HCT116 (cell line): ENCODE measurements at regions of chr11 and their contacts with region 1.

Region 1: DNA sequence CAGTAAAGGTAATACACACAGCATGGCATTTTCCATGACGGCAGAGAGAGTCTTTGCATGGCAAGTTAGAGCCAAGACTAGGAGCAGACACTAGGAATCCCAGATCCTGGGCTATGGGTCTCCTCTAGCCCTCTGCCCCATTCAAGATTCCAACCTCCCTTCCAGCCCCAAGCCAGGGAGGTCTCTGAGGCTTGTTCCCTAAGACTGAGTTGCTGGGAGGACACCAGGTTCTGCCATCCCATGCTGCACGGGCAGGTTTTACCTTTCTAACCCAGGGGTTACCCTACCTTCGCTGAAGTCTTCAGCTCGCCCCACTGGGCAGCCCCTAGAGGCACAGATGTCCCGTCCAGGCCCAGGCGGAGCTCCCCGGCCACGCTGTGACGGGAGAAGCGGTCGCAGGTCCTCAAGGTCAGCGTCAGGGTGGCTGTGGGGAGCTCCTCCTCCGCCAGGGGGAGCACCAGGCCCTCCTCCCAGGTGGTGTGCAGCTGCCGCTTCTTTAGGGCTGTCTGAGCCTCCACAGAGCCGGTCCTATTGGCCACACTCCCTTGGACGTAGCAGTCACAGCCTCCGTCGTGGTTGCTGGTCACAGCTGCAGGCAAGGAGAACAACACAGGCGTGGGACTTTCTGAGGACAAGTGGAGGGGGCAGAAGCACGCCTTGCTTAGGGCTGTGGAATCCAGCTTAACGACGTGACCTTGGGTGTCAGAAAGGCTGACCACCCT is 33.8 kb downstream of the SYT13 start:
- DNase-seq: peak; percentile 75
- ATAC-seq: peak; percentile 100
- H3K4me3 ChIP-seq: peak overlapping the region; percentile 36 to 48
- H3K27ac ChIP-seq: no peak overlapping the region
- H3K4me1 ChIP-seq: peaks cover 3 to 25% of the 10 kb centered on the region in 2 experiments; a peak in 3 of 4 replicates
- H3K27me3 ChIP-seq: no peaks in the 10 kb centered on the region
- CTCF ChIP-seq: peak; percentile 88 to 97 (median 90)
- POLR2A ChIP-seq: peak; percentile 40
- RAD21 ChIP-seq: peak; percentile 88

Region 2: GRCh38 chr11:45062971-45063611 is 189.2 kb before region 1 on chr11:
- CTCF ChIA-PET with region 1: no interaction called
- POLR2A ChIA-PET with region 1: no interaction called
- RAD21 ChIA-PET with region 1: no interaction called
- intact Hi-C with region 1: no loop called
- DNase-seq: no peak
- ATAC-seq: no peak
- H3K4me3 ChIP-seq: no peak overlapping the region
- H3K27ac ChIP-seq: no peak overlapping the region
- H3K4me1 ChIP-seq: no peaks in the 10 kb centered on the region; a peak in 1 of 4 replicates
- H3K27me3 ChIP-seq: no peaks in the 10 kb centered on the region
- CTCF ChIP-seq: no peak
- POLR2A ChIP-seq: no peak
- RAD21 ChIP-seq: no peak

Region 3: GRCh38 chr11:45110562-45110961 is 141.7 kb before region 1 on chr11:
- CTCF ChIA-PET with region 1: interaction called, 27 read pairs
- POLR2A ChIA-PET with region 1: no interaction called
- RAD21 ChIA-PET with region 1: interaction called, 6 to 9 read pairs
- intact Hi-C with region 1: loop called (anchors 5 kb)
- DNase-seq: peak; percentile 64
- ATAC-seq: peak; percentile 90
- H3K4me3 ChIP-seq: no peak overlapping the region
- H3K27ac ChIP-seq: no peak overlapping the region
- H3K4me1 ChIP-seq: peaks cover 0 to 14% of the 10 kb centered on the region in 2 experiments; a peak in 2 of 4 replicates
- H3K27me3 ChIP-seq: no peaks in the 10 kb centered on the region
- CTCF ChIP-seq: peak; percentile 59 to 91 (median 76); a peak in 5 of 6 replicates
- POLR2A ChIP-seq: no peak
- RAD21 ChIP-seq: peak; percentile 92

Region 4: DNA sequence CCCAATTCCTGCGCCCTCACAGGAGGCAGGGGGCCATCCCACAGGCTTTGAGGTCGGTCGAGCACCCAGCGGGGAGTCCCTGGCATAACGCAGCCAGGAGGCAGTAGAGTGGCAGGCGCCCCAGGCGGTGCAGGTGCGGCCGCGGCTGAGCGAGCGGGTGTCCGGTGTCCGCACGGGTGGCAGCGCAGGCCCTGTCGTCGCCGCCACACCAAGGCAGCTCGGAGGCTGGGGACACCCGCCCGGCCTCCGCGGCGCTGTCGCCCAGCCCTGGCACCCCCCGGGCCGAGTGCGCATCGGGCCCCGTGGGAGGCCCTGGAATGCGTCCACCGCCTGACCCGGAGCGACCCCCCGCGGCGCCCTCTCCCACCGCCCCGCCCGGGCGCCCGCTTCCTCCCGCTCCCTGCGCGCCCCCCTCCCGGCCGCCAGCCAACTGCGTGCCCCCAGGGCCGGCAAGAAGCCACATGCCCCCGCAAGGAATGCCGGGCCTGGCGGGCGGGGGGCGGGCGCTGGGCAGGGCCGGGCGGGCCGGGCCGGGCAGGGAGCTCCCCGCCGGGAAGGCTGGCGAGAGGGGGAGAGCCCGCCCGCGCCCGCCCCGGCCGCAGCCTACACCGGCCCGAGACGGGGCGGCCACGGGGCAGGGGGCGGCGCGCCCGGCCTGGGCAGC is 72.0 kb before region 1 on chr11:
- CTCF ChIA-PET with region 1: interaction called, 3 read pairs
- POLR2A ChIA-PET with region 1: no interaction called
- RAD21 ChIA-PET with region 1: no interaction called
- intact Hi-C with region 1: loop called (anchors 10 kb)
- DNase-seq: peak; percentile 16
- ATAC-seq: peak; percentile 84
- H3K4me3 ChIP-seq: peak overlapping the region; percentile 44 to 56
- H3K27ac ChIP-seq: peak overlapping the region; percentile 82
- H3K4me1 ChIP-seq: peaks cover 27 to 28% of the 10 kb centered on the region in 2 experiments
- H3K27me3 ChIP-seq: no peaks in the 10 kb centered on the region
- CTCF ChIP-seq: peak in 2 of 3 experiments; percentile 54 to 67; a peak in 4 of 6 replicates
- POLR2A ChIP-seq: no peak
- RAD21 ChIP-seq: no peak

Region 5: DNA sequence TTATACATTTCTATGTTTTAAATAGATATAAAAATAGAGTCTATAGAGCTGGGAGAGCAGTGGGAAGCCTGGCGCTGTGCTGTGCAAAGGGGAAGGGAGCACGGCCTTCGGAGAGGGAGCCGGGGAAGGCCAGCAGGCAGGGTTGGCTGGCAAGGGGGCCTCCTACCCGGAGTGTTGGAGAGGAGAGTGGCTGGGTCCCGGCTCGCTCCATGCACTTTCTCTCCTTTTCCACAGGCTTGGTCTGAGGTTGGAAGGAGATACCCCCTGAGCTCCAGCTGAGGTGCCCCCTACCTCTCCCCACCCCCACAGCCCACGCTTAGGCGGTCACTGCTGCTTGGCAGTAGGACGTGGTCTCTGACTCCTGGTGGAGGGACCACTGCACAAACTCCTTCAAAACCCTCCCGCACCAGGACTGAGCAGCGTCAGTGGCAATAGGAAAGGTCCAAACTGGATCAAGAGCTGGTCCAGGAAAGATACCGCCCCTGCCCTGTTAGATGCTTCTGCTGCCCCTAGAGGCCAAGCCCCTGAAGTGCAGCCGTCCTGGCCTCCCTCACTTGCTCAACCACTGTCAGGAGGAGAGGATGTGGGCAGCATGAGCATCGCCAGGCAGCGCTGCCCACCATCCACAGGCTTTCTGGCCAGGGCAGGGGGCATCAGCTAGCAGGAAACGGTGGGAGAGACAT is 19.0 kb before region 1 on chr11:
- CTCF ChIA-PET with region 1: interaction called, 13 read pairs
- POLR2A ChIA-PET with region 1: interaction called, 7 read pairs
- RAD21 ChIA-PET with region 1: no interaction called
- intact Hi-C with region 1: no loop called
- DNase-seq: peak; percentile 28
- ATAC-seq: peak; percentile 97
- H3K4me3 ChIP-seq: no peak overlapping the region
- H3K27ac ChIP-seq: no peak overlapping the region
- H3K4me1 ChIP-seq: no peaks in the 10 kb centered on the region
- H3K27me3 ChIP-seq: peaks cover 8% of the 10 kb centered on the region; the same call in 1 of the 2 replicates
- CTCF ChIP-seq: peak; percentile 17 to 95 (median 82); a peak in 5 of 6 replicates
- POLR2A ChIP-seq: no peak
- RAD21 ChIP-seq: peak; percentile 32; the same call in 1 of the 2 replicates

Region 6: DNA sequence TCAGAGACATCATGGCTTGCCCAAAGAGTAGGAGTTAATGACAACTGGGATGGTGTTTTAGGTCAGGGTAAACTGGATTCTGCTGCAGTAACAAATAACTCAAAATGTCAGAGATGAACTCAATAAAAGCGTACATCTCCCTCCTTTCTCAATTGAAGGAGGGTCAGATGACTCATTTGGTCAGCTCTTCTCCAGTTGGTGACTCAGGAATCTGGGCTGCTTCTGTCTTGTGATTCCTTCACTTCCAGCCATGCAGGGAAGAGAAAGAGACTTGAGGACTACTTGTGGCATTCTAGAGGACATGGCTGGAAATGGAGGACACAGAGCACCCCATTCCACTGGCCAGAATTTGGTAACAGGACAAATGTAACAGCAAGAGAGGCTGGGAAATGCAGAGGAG is 37.1 kb after region 1 on chr11:
- CTCF ChIA-PET with region 1: interaction called, 10 read pairs
- POLR2A ChIA-PET with region 1: interaction called, 4 read pairs
- RAD21 ChIA-PET with region 1: interaction called in 1 of 2 experiments, 4 read pairs
- intact Hi-C with region 1: loop called (anchors 1 kb)
- DNase-seq: no peak
- ATAC-seq: no peak
- H3K4me3 ChIP-seq: no peak overlapping the region
- H3K27ac ChIP-seq: no peak overlapping the region
- H3K4me1 ChIP-seq: peaks cover 0 to 6% of the 10 kb centered on the region in 2 experiments; a peak in 2 of 4 replicates
- H3K27me3 ChIP-seq: no peaks in the 10 kb centered on the region
- CTCF ChIP-seq: no peak
- POLR2A ChIP-seq: no peak
- RAD21 ChIP-seq: no peak

Region 7: GRCh38 chr11:45294499-45294898 is 42.2 kb after region 1 on chr11:
- CTCF ChIA-PET with region 1: interaction called, 10 read pairs
- POLR2A ChIA-PET with region 1: no interaction called
- RAD21 ChIA-PET with region 1: interaction called in 1 of 2 experiments, 4 read pairs
- intact Hi-C with region 1: loop called (anchors 1 kb)
- DNase-seq: no peak
- ATAC-seq: no peak
- H3K4me3 ChIP-seq: no peak overlapping the region
- H3K27ac ChIP-seq: no peak overlapping the region
- H3K4me1 ChIP-seq: peaks cover 0 to 2% of the 10 kb centered on the region in 2 experiments; a peak in 2 of 4 replicates
- H3K27me3 ChIP-seq: no peaks in the 10 kb centered on the region
- CTCF ChIP-seq: no peak
- POLR2A ChIP-seq: no peak
- RAD21 ChIP-seq: no peak

Region 8: GRCh38 chr11:45332276-45332934 is 80.1 kb after region 1 on chr11:
- CTCF ChIA-PET with region 1: interaction called, 5 read pairs
- POLR2A ChIA-PET with region 1: no interaction called
- RAD21 ChIA-PET with region 1: no interaction called
- intact Hi-C with region 1: loop called (anchors 5 kb)
- DNase-seq: peak; percentile 29
- ATAC-seq: peak; percentile 75
- H3K4me3 ChIP-seq: no peak overlapping the region
- H3K27ac ChIP-seq: no peak overlapping the region
- H3K4me1 ChIP-seq: peaks cover 6 to 16% of the 10 kb centered on the region in 2 experiments; a peak in 3 of 4 replicates
- H3K27me3 ChIP-seq: no peaks in the 10 kb centered on the region
- CTCF ChIP-seq: peak; percentile 45 to 60 (median 56); a peak in 5 of 6 replicates
- POLR2A ChIP-seq: no peak
- RAD21 ChIP-seq: peak; percentile 75